SK-N-SH (cell line): ENCODE measurements at regions of chr15 and their contacts with region 1.

Region 1: DNA sequence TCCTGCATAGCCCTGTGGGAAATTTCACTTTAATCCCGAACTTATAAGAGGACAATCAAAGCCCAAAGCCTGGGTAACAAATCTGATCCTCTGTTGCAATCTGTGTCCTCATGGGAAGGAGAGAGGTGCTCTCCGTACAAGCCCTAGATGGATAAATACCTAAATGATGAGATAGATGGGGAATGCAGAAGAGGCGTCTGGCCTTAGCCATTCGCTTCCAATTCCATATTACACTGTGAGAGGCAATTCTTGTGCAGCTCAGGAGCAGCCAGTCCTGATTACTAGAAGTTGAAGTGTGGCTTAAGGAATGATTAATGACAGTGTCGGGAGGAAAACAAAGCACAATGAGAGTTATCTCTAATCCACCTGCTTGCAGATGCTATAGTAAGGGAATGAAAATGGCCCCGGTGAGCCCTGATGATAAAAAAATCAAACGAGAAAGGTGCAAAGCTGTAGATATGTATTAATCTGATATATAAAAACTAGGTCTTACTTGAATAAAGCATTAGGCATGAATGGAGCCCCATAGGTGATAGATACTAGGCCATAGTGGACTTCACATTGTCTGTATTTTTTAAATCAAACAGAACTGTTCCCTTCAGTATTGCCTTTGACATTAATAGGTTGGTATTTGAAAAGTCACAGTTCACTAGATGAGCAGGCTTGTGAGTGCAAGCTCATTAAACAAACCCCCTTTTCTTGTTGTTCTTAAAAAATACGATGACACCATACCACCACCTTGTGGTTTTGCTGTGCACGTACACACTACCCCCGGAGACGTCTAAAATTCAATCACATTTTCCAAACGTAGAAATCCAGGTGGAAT is 54.2 kb upstream of the TMCO5A start:
- DNase-seq: no peak
- H3K4me3 ChIP-seq: peak overlapping the region; percentile 17 to 34
- H3K27ac ChIP-seq: peak overlapping the region; percentile 90 to 99
- H3K4me1 ChIP-seq: peaks cover 24 to 51% of the 10 kb centered on the region in 2 experiments
- H3K27me3 ChIP-seq: no peaks in the 10 kb centered on the region
- CTCF ChIP-seq: peak; percentile 92
- EP300 ChIP-seq: peak; percentile 37 to 42; a peak in 2 of 4 replicates
- RAD21 ChIP-seq: peak; percentile 94

Region 2: DNA sequence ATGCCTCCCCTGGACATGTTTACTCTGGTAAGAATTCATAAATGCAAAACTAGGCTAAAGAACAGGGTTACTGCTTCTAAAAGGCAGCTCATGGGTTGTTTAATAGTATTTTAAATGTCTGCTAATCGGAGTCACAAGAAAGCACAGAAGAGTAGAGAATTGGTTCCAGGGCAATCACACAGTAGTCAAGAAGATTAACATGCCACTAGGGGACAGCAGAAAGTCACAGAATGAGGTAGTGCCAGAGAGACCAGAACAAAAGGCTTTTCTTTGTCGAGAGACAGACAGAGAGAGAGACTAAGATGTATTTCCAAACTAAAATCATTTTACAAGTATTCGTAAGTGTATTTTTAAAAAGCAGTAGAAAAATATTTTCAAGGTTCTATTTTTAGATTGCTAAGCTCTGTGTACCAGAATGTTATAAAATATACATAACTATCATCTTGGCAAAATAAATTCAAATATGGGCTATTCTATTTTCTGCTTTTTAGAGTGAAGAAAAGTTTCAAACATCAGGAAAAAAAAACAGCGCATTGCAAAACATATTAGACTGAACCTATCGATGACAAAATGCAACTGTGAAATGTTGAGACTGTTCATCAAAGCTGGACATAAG is 1379.1 kb before region 1 on chr15:
- CTCF ChIA-PET with region 1: interaction called, 10 read pairs
- POLR2A ChIA-PET with region 1: no interaction called
- DNase-seq: peak; percentile 57
- H3K4me3 ChIP-seq: no peak overlapping the region
- H3K27ac ChIP-seq: peak overlapping the region; percentile 40 to 55
- H3K4me1 ChIP-seq: peaks cover 4 to 12% of the 10 kb centered on the region in 2 experiments; a peak in 2 of 4 replicates
- H3K27me3 ChIP-seq: no peaks in the 10 kb centered on the region
- CTCF ChIP-seq: peak; percentile 87
- EP300 ChIP-seq: no peak
- RAD21 ChIP-seq: peak; percentile 98

Region 3: DNA sequence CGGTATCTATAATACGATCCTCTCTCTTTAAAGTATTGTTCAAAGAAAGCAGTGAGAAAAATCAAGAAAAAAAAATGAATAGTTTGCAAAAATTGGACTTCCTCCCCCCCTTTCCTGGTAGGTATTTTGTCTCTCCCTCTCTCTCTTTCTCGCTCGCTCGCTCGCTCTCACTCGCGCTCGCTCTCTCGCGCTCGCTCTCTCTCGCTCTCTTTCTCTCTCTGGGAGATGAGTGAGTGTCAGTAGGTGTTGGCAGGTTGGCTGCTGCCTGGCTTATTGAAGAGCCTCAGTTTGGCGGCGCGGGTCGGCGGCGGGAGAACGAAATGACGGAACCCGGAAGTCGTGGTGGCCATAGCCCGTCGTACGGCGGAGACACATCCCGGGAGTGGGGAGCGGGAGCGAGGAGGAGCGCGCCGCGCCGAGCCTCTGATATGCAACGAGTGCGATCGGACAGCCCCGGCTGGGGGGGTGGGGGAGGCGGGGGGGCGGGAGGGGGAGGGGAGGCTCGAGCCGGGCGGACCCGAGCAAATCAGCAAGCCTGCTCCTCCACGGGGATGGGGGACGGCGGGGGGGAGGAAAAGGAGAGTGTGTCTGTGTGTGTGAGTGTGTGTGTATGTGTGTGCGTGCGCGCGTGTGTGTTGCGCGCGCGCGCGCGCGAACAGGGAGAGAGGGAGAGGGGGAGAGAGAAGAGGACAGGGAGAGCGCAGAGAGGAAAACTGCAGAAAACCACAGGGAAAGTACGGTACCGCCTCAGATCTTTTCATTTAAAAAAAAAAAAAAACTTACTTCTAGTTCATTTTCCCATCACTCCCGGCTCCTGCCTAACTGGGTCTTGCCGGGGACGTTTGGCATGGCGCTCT is 779.9 kb before region 1 on chr15 and contains the start of gene MEIS2:
- CTCF ChIA-PET with region 1: interaction called, 14 read pairs
- POLR2A ChIA-PET with region 1: interaction called, 8 read pairs
- DNase-seq: peak; percentile 97
- H3K4me3 ChIP-seq: peak within 1 kb of the TSS; percentile 74 to 92
- H3K27ac ChIP-seq: peak within 1 kb of the TSS; percentile 99
- H3K4me1 ChIP-seq: no peaks in the 10 kb centered on the region
- H3K27me3 ChIP-seq: no peaks in the 10 kb centered on the region
- CTCF ChIP-seq: no peak
- EP300 ChIP-seq: peak in 1 of 2 experiments; percentile 46; a peak in 2 of 4 replicates
- RAD21 ChIP-seq: no peak
- polyA plus RNA-seq, gene MEIS2: 120 and 146 TPM in 2 replicates

Region 4: GRCh38 chr15:37134699-37135131 is 745.5 kb before region 1 on chr15:
- CTCF ChIA-PET with region 1: interaction called, 39 read pairs
- POLR2A ChIA-PET with region 1: no interaction called
- DNase-seq: no peak
- H3K4me3 ChIP-seq: no peak overlapping the region
- H3K27ac ChIP-seq: peak overlapping the region in 1 of 2 experiments; percentile 97; a peak in 2 of 4 replicates
- H3K4me1 ChIP-seq: peaks cover 5 to 44% of the 10 kb centered on the region in 2 experiments; a peak in 2 of 4 replicates
- H3K27me3 ChIP-seq: no peaks in the 10 kb centered on the region
- CTCF ChIP-seq: peak; percentile 83
- EP300 ChIP-seq: 0 out of 4 replicates have a peak, but pooled peaks of 1 of the 2 experiments have one; percentile 26
- RAD21 ChIP-seq: peak; percentile 57; the same call in 1 of the 2 replicates

Region 5: DNA sequence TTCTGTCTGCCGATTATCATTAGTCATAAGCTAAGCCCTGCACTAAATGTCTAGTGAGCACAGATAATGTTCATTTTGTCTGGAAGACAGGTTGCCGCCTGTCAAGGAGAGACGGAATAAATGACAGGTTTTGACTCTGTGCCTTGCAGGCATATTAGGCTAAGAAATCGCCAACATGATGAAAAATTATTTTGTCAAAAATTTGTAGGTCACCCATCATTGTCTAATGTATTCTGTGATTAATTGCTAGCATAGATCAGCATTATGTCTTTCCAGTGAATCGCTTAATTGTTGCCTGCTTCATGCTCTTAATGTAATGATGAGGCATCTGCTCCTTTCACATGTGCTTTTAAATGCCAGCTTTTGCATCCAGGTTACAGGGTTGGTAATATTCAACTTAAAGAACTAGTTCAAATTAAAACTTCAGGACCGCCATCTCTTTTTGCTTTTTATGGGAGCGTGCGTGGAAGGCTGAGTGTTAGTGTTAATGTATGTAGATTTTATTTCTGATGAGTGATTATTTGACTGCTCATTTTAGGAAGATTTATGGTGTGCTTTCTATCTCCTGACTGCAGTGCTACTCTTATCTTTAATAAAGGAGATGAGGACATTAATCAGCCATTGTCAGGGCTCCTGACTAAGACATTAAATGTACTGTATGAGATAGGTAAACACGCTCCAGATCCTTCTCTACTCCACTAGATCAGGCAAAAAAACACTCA is 659.1 kb before region 1 on chr15:
- CTCF ChIA-PET with region 1: interaction called, 37 read pairs
- POLR2A ChIA-PET with region 1: interaction called, 5 read pairs
- DNase-seq: peak; percentile 18
- H3K4me3 ChIP-seq: peak overlapping the region; percentile 11 to 35; a peak in 2 of 4 replicates
- H3K27ac ChIP-seq: peak overlapping the region; percentile 36 to 100; a peak in 3 of 4 replicates
- H3K4me1 ChIP-seq: peaks cover 3 to 40% of the 10 kb centered on the region in 2 experiments; a peak in 2 of 4 replicates
- H3K27me3 ChIP-seq: no peaks in the 10 kb centered on the region
- CTCF ChIP-seq: no peak
- EP300 ChIP-seq: peak; percentile 19 to 97
- RAD21 ChIP-seq: peak; percentile 12; the same call in 1 of the 2 replicates

Region 6: GRCh38 chr15:37678124-37678523 is 202.1 kb before region 1 on chr15:
- CTCF ChIA-PET with region 1: no interaction called
- POLR2A ChIA-PET with region 1: no interaction called
- DNase-seq: no peak
- H3K4me3 ChIP-seq: no peak overlapping the region
- H3K27ac ChIP-seq: no peak overlapping the region
- H3K4me1 ChIP-seq: no peaks in the 10 kb centered on the region
- H3K27me3 ChIP-seq: no peaks in the 10 kb centered on the region
- CTCF ChIP-seq: no peak
- EP300 ChIP-seq: no peak
- RAD21 ChIP-seq: no peak

Region 7: GRCh38 chr15:37819191-37819590 is 61.0 kb before region 1 on chr15:
- CTCF ChIA-PET with region 1: interaction called, 38 read pairs
- POLR2A ChIA-PET with region 1: interaction called, 5 read pairs
- DNase-seq: no peak
- H3K4me3 ChIP-seq: no peak overlapping the region
- H3K27ac ChIP-seq: peak overlapping the region in 1 of 2 experiments; percentile 100; a peak in 2 of 4 replicates
- H3K4me1 ChIP-seq: peaks cover 3 to 43% of the 10 kb centered on the region in 2 experiments; a peak in 2 of 4 replicates
- H3K27me3 ChIP-seq: no peaks in the 10 kb centered on the region
- CTCF ChIP-seq: no peak
- EP300 ChIP-seq: no peak
- RAD21 ChIP-seq: peak; percentile 4; the same call in 1 of the 2 replicates

Region 8: DNA sequence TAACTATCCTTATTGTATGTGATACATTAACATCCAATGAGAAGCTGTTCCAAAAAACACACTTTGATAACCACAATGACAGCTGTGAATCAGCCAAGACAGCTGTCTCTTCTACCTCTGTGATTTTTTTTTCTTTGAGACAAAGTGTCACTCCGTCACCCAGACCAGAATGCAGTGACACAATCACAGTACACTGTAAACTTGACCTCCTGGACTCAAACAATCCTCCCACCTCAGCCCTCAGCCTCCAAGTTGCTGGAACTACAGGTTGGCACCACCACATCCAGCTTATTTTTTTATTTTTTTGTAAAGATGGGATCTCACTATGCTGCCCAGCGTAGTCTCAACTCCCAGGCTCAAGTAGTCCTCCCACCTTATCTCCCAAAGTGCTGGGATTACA is 19.3 kb before region 1 on chr15:
- CTCF ChIA-PET with region 1: no interaction called
- POLR2A ChIA-PET with region 1: no interaction called
- DNase-seq: no peak
- H3K4me3 ChIP-seq: no peak overlapping the region
- H3K27ac ChIP-seq: no peak overlapping the region
- H3K4me1 ChIP-seq: no peaks in the 10 kb centered on the region; a peak in 1 of 4 replicates
- H3K27me3 ChIP-seq: no peaks in the 10 kb centered on the region
- CTCF ChIP-seq: no peak
- EP300 ChIP-seq: no peak
- RAD21 ChIP-seq: no peak